A549 (cell line): ENCODE measurements at regions of chr7 and their contacts with region 1.

Region 1: DNA sequence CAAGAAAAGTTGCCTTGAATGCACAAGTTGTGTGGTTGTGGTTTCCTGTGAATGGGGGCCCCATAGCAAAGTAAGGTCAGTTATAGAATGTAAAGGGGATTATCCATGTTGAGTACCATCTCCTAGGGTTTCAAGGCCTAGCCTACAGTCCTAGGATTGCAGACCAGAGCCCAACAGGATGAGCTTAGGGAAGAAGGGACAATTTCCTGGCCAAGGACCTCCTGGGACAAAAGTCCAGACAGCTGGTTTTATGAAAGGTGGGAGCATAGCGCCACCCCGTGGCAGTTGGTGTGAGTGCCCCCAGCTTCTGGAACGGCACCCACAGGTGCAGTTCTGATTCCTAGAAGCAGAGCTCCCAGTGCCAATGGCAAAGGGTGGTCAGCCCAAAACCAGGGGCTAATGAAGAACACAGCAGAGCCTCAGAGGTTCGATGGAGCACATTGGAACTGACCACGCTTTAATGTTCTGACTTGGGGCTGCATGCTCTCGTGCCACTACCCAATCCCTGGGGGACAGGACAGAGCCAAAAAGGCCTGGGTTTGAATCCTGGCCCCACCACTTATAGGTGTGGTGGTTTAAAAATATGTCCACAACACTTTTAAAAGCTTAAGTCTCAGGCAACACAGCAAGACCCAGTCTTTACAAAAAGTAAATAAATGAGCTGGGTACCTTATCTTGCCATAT is 25.8 kb upstream of the TMEM120A start:
- DNase-seq: peak; percentile 77
- ATAC-seq: peak; percentile 93 to 95
- H3K4me3 ChIP-seq: no peak overlapping the region
- H3K27ac ChIP-seq: no peak overlapping the region
- H3K4me1 ChIP-seq: no peaks in the 10 kb centered on the region
- CTCF ChIP-seq: peak; percentile 84
- EP300 ChIP-seq: no peak
- POLR2A ChIP-seq: no peak
- RAD21 ChIP-seq: peak; percentile 92 to 96

Region 2: GRCh38 chr7:75762314-75762917 is 257.8 kb before region 1 on chr7:
- CTCF ChIA-PET with region 1: interaction called, 14 read pairs
- POLR2A ChIA-PET with region 1: no interaction called
- DNase-seq: peak; percentile 80 to 92
- ATAC-seq: peak; percentile 97 to 99
- H3K4me3 ChIP-seq: no peak overlapping the region
- H3K27ac ChIP-seq: 0 out of 6 replicates have a peak overlapping the region, but pooled peaks have one; percentile 4 to 15
- H3K4me1 ChIP-seq: 0 out of 3 replicates have a peak, but pooled peaks cover 4% of the 10 kb centered on the region
- CTCF ChIP-seq: peak; percentile 84
- EP300 ChIP-seq: no peak
- POLR2A ChIP-seq: no peak
- RAD21 ChIP-seq: peak; percentile 94

Region 3: GRCh38 chr7:75866489-75867389 is 153.4 kb before region 1 on chr7:
- CTCF ChIA-PET with region 1: interaction called, 82 read pairs
- POLR2A ChIA-PET with region 1: no interaction called
- DNase-seq: peak; percentile 77 to 86
- ATAC-seq: peak; percentile 98
- H3K4me3 ChIP-seq: no peak overlapping the region
- H3K27ac ChIP-seq: peak overlapping the region; percentile 47 to 78
- H3K4me1 ChIP-seq: peaks cover 14% of the 10 kb centered on the region
- CTCF ChIP-seq: peak; percentile 92
- EP300 ChIP-seq: no peak
- POLR2A ChIP-seq: no peak
- RAD21 ChIP-seq: peak; percentile 92 to 98

Region 4: GRCh38 chr7:75872073-75872782 is 147.9 kb before region 1 on chr7:
- CTCF ChIA-PET with region 1: interaction called, 82 read pairs
- POLR2A ChIA-PET with region 1: no interaction called
- DNase-seq: no peak
- ATAC-seq: peak in 1 of 2 experiments; percentile 58; a peak in 3 of 6 replicates
- H3K4me3 ChIP-seq: no peak overlapping the region
- H3K27ac ChIP-seq: no peak overlapping the region
- H3K4me1 ChIP-seq: peaks cover 2% of the 10 kb centered on the region; the same call in 2 of the 3 replicates
- CTCF ChIP-seq: no peak
- EP300 ChIP-seq: no peak
- POLR2A ChIP-seq: no peak
- RAD21 ChIP-seq: no peak

Region 5: DNA sequence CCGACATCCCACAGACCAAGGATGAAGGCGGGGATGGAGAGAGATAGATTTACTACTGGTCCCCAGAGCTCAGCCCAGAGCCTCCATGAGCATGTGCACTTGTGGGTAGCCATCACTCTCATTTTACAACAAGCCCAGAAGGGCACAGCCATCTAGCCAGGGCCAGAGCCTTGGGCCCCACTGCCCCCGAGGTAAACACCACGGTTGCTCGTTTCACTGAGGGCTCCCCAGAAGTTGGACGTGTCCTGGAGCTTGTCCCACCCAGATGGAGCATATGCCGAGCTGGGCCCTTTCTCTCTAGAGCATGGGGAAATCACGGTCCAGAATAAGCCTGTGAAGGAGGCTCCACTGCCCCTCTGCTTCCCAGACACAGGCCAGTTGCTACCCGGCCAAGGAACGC is 16.8 kb before region 1 on chr7:
- CTCF ChIA-PET with region 1: interaction called, 23 read pairs
- POLR2A ChIA-PET with region 1: no interaction called
- DNase-seq: no peak
- ATAC-seq: no peak
- H3K4me3 ChIP-seq: no peak overlapping the region
- H3K27ac ChIP-seq: no peak overlapping the region
- H3K4me1 ChIP-seq: no peaks in the 10 kb centered on the region
- CTCF ChIP-seq: no peak
- EP300 ChIP-seq: no peak
- POLR2A ChIP-seq: no peak
- RAD21 ChIP-seq: no peak

Region 6: DNA sequence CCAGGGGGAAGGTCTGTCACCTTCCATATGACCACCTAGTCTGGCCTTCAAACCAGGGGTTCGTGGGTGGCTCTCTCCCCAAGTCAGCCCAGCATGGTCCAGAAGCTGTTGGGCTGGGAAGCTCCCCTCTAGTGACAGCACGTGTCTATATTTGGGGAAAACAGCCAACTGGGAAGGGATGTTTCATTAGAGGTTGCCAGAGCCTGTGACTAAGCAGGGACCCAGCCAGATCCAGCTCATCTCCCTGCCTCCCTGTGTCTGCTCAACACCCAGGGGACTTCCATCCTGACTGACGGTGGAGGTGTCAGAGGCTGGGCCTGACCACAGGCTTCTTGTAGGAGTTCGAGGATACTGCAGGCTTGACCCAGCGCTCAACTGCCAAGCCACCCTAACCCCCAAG is 17.1 kb after region 1 on chr7:
- CTCF ChIA-PET with region 1: interaction called, 18 read pairs
- POLR2A ChIA-PET with region 1: no interaction called
- DNase-seq: peak in 1 of 2 experiments; percentile 17
- ATAC-seq: peak; percentile 20 to 58; a peak in 3 of 6 replicates
- H3K4me3 ChIP-seq: no peak overlapping the region
- H3K27ac ChIP-seq: no peak overlapping the region
- H3K4me1 ChIP-seq: peaks cover 7% of the 10 kb centered on the region; the same call in 2 of the 3 replicates
- CTCF ChIP-seq: no peak
- EP300 ChIP-seq: no peak
- POLR2A ChIP-seq: no peak
- RAD21 ChIP-seq: no peak

Region 7: DNA sequence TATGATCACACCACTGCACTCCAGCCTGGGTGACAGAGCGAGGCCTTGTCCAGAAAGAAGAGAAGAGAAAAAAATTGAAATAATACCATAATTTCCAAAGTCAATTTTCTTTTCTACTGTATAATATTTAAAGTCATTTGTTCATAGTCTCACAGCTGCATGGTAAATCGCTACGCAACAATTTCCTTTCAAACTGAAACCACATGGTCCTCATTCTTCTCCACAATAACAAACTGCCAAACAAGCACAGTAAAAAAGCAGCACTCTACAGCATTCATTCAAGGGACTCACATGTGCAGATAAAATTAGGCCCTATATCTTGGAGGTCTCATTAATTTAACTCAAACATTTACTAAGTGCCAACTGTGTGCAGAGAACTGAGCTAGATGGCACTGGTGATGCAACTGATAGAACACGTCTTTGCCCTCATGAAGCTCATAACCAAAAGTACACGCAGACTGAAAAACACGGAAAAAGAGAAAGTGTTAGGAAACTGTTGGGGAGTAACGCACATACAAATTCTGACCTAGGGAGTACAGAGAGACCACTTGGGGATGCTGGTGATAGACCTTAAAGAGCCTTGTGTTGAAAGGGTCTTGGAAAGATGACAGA is 113.1 kb after region 1 on chr7:
- CTCF ChIA-PET with region 1: interaction called, 13 read pairs
- POLR2A ChIA-PET with region 1: no interaction called
- DNase-seq: no peak
- ATAC-seq: no peak
- H3K4me3 ChIP-seq: no peak overlapping the region
- H3K27ac ChIP-seq: no peak overlapping the region
- H3K4me1 ChIP-seq: peaks cover 11% of the 10 kb centered on the region; the same call in 2 of the 3 replicates
- CTCF ChIP-seq: no peak
- EP300 ChIP-seq: no peak
- POLR2A ChIP-seq: no peak
- RAD21 ChIP-seq: no peak